K562 (cell line): ENCODE measurements at regions of chr9 and their contacts with region 1.

Region 1: DNA sequence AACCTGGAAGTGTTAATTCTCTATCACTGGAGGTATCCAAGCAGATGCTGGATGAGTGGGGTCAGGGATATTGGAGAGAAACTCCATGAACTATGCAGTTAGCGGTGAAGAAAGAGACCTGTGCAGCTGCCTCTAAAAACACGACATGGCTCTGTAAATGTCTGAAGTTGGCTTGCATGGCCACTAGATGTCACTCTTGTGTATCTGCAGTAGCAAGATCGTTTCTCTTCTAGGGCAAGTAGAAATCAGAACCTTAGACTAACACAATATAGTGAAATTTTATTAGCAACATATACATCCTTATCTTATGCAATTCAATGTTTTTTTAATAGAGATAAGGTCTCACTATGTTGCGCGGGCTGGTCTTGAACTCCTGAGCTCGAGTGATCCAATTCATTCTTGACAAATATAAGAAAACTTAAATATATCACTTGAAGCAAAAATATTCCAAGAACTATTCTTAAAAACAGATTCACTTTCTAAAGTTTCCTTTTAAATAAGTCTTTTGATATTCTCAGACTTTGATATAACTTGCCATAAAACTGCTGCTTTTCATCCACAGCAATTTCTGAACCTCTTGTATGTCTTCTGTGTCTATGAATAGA is 2.9 kb downstream of the OR2S2 start:
- DNase-seq: peak; percentile 30 to 65 (median 39)
- ATAC-seq: peak; percentile 80
- H3K4me3 ChIP-seq: no peak overlapping the region
- H3K27ac ChIP-seq: no peak overlapping the region
- H3K4me1 ChIP-seq: no peaks in the 10 kb centered on the region
- H3K27me3 ChIP-seq: peaks cover 0 to 13% of the 10 kb centered on the region in 2 experiments; a peak in 2 of 5 replicates
- CTCF ChIP-seq: peak; percentile 66 to 79 (median 77)
- EP300 ChIP-seq: no peak
- POLR2A ChIP-seq: no peak
- RAD21 ChIP-seq: peak; percentile 68 to 80

Region 2: DNA sequence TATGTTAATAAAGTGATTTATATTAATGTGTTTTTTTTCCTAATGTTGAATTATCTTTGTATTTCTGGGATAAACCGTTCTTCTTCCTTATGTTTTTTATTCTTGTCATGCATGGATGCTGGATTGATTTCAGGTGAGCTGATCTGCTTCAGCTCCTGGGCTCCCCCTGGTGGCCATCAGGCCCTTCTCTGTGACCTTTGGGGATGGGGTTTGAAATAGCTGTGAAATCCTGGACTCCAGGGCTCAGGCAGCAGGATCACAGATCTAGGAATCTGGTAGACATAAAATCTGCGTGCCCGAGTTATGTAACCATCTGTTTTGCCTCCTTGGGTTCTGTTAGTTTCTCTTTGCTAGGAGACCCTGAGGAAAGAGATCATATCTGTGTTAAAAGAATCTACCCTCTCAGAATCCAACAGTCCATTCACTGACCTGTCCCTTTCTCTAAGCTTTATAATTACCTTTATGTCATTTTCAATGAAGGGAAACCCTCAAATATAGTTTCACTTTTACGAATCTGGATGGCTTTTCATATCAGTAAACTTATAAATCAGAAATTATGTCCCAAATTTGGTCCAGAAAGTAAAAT is 72.7 kb before region 1 on chr9:
- CTCF ChIA-PET with region 1: no interaction called
- POLR2A ChIA-PET with region 1: no interaction called
- in situ Hi-C with region 1: no loop called
- intact Hi-C with region 1: no loop called
- DNase-seq: peak; percentile 64 to 75 (median 68)
- ATAC-seq: peak; percentile 85
- H3K4me3 ChIP-seq: no peak overlapping the region
- H3K27ac ChIP-seq: no peak overlapping the region
- H3K4me1 ChIP-seq: no peaks in the 10 kb centered on the region
- H3K27me3 ChIP-seq: no peaks in the 10 kb centered on the region
- CTCF ChIP-seq: peak; percentile 81 to 88 (median 85)
- EP300 ChIP-seq: no peak
- POLR2A ChIP-seq: no peak
- RAD21 ChIP-seq: peak; percentile 66 to 82

Region 3: DNA sequence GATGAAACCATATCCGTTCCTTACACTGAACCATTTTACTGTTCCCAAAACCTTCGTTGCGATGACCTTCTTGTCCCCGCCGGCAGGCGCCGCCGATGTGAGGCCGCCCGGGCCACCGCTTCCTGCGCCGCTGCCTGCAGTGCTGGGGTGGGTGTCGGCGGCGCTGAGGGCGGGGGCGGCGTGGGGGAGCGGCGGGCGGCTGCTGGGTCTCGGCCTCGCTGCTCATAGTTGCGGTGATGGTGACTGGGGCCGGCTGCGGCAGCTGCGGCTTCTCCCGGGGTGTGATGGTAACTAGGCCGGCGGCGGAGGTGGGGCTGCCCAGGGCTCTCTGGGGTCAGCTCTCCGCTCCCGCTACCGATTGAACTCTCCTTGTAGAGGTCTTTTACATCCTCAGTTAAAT is 17.0 kb after region 1 on chr9:
- CTCF ChIA-PET with region 1: no interaction called
- POLR2A ChIA-PET with region 1: no interaction called
- in situ Hi-C with region 1: no loop called
- intact Hi-C with region 1: no loop called
- DNase-seq: no peak
- ATAC-seq: peak; percentile 49; the same call in 2 of the 3 replicates
- H3K4me3 ChIP-seq: no peak overlapping the region
- H3K27ac ChIP-seq: no peak overlapping the region
- H3K4me1 ChIP-seq: peaks cover 0 to 5% of the 10 kb centered on the region in 2 experiments; a peak in 1 of 5 replicates
- H3K27me3 ChIP-seq: peaks cover 0 to 7% of the 10 kb centered on the region in 2 experiments; a peak in 1 of 5 replicates
- CTCF ChIP-seq: no peak
- EP300 ChIP-seq: no peak
- POLR2A ChIP-seq: no peak
- RAD21 ChIP-seq: no peak

Region 4: GRCh38 chr9:36008774-36009300 is 53.8 kb after region 1 on chr9:
- CTCF ChIA-PET with region 1: no interaction called
- POLR2A ChIA-PET with region 1: no interaction called
- in situ Hi-C with region 1: no loop called
- intact Hi-C with region 1: loop called (anchors 5 kb)
- DNase-seq: peak; percentile 79 to 83 (median 80)
- ATAC-seq: peak; percentile 99
- H3K4me3 ChIP-seq: no peak overlapping the region
- H3K27ac ChIP-seq: no peak overlapping the region
- H3K4me1 ChIP-seq: peaks cover 0 to 6% of the 10 kb centered on the region in 2 experiments; a peak in 3 of 5 replicates
- H3K27me3 ChIP-seq: peaks cover 0 to 7% of the 10 kb centered on the region in 2 experiments; a peak in 1 of 5 replicates
- CTCF ChIP-seq: peak; percentile 99 to 100 (median 100)
- EP300 ChIP-seq: no peak
- POLR2A ChIP-seq: no peak
- RAD21 ChIP-seq: peak; percentile 52 to 77

Region 5: GRCh38 chr9:36023260-36024048 is 68.4 kb after region 1 on chr9:
- CTCF ChIA-PET with region 1: interaction called, 8 read pairs
- POLR2A ChIA-PET with region 1: no interaction called
- in situ Hi-C with region 1: no loop called
- intact Hi-C with region 1: loop called (anchors 1 kb)
- DNase-seq: peak; percentile 34 to 69 (median 46)
- ATAC-seq: peak; percentile 80
- H3K4me3 ChIP-seq: no peak overlapping the region
- H3K27ac ChIP-seq: no peak overlapping the region
- H3K4me1 ChIP-seq: no peaks in the 10 kb centered on the region; a peak in 1 of 5 replicates
- H3K27me3 ChIP-seq: peaks cover 0 to 3% of the 10 kb centered on the region in 2 experiments; a peak in 1 of 5 replicates
- CTCF ChIP-seq: peak; percentile 72 to 84 (median 80)
- EP300 ChIP-seq: no peak
- POLR2A ChIP-seq: no peak
- RAD21 ChIP-seq: peak; percentile 73 to 81

Region 6: GRCh38 chr9:36110434-36110833 is 155.4 kb after region 1 on chr9:
- CTCF ChIA-PET with region 1: no interaction called
- POLR2A ChIA-PET with region 1: no interaction called
- in situ Hi-C with region 1: no loop called
- intact Hi-C with region 1: no loop called
- DNase-seq: no peak
- ATAC-seq: no peak
- H3K4me3 ChIP-seq: no peak overlapping the region
- H3K27ac ChIP-seq: no peak overlapping the region
- H3K4me1 ChIP-seq: no peaks in the 10 kb centered on the region; a peak in 1 of 5 replicates
- H3K27me3 ChIP-seq: peaks cover 7 to 10% of the 10 kb centered on the region in 2 experiments; a peak in 2 of 5 replicates
- CTCF ChIP-seq: no peak
- EP300 ChIP-seq: no peak
- POLR2A ChIP-seq: no peak
- RAD21 ChIP-seq: peak in 1 of 2 experiments; percentile 19; a peak in 1 of 4 replicates